Mucosa of descending colon (tissue), 3 donors: ENCODE measurements at regions of chr7 and their contacts with region 1.

Region 1: GRCh38 chr7:46229409-46229808 is 308.3 kb upstream of the IGFBP3 start:
- DNase-seq: no peak
- ATAC-seq: no peak
- H3K4me3 ChIP-seq: no peak overlapping the region
- H3K4me1 ChIP-seq: no peaks in the 10 kb centered on the region
- CTCF ChIP-seq: no peak

Region 2: GRCh38 chr7:46032984-46033383 is 196.4 kb before region 1 on chr7:
- intact Hi-C with region 1: loop called in 1 of 2 experiments (anchors 5 kb)
- DNase-seq: no peak
- ATAC-seq: no peak
- H3K4me3 ChIP-seq: no peak overlapping the region
- H3K4me1 ChIP-seq: no peaks in the 10 kb centered on the region
- CTCF ChIP-seq: no peak